Calu3 (cell line): ENCODE measurements at regions of chr3 and their contacts with region 1.

Region 1: DNA sequence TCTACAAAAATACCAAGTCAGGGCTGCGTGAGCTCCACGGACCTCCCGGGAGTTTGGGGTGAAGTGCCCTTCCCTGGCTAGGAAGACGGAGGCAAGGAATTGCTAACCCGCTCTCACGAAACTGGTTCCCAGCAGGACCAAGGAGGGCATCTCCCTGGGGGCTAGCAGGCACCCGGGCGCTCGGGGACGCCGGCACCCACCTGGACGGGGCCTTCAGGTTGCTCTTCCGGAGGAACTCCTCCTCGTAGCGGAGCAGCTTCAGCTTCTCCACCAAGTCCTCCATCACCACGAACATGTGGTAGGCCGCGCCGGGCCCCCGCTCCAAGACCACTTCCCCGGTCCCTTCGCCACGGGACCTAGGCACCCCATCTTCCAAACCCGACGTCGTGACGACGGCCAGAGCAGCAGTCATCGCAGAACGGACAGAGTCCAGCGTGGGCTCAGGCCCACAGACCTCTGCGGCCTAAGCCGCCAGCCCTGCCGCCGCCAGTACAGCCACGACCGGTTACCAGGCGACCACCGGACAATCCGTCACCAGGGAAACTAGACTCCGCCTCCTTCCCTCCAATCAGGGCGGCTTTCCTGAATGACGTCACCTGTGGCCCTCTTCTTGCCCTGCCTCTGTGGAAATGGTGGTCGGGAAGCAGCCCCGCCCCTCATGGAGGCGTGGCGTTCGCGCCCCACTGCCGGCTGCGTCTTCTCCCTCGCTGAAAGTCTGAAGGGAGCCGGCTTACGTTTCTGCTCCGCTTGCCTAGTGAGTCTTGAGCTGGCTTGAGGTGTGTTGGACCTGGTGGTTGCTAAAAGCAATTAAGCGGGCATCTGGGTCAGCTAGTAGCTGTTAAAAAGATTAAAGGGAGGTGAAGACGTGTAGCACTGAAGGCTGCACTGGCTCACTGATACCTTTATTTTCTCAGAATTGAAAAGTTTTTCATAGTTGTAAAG is at the start of gene IFT57:
- DNase-seq: peak; percentile 96
- H3K4me3 Mint-ChIP-seq: peak within 1 kb of the TSS; percentile 100
- H3K27ac Mint-ChIP-seq: peak within 1 kb of the TSS; percentile 99
- H3K4me1 Mint-ChIP-seq: peaks cover 24% of the 10 kb centered on the region
- H3K27me3 Mint-ChIP-seq: no peaks in the 10 kb centered on the region
- CTCF ChIP-seq: no peak
- total RNA-seq, gene IFT57: 35.4 and 47.2 TPM in 2 replicates

Region 2: GRCh38 chr3:108088697-108089096 is 133.5 kb before region 1 on chr3:
- CTCF ChIA-PET with region 1: no interaction called
- intact Hi-C with region 1: loop called (anchors 5 kb)
- DNase-seq: peak; percentile 20
- H3K4me3 Mint-ChIP-seq: peak overlapping the region; percentile 33
- H3K27ac Mint-ChIP-seq: no peak overlapping the region
- H3K4me1 Mint-ChIP-seq: peaks cover 11% of the 10 kb centered on the region
- H3K27me3 Mint-ChIP-seq: no peaks in the 10 kb centered on the region
- CTCF ChIP-seq: no peak

Region 3: DNA sequence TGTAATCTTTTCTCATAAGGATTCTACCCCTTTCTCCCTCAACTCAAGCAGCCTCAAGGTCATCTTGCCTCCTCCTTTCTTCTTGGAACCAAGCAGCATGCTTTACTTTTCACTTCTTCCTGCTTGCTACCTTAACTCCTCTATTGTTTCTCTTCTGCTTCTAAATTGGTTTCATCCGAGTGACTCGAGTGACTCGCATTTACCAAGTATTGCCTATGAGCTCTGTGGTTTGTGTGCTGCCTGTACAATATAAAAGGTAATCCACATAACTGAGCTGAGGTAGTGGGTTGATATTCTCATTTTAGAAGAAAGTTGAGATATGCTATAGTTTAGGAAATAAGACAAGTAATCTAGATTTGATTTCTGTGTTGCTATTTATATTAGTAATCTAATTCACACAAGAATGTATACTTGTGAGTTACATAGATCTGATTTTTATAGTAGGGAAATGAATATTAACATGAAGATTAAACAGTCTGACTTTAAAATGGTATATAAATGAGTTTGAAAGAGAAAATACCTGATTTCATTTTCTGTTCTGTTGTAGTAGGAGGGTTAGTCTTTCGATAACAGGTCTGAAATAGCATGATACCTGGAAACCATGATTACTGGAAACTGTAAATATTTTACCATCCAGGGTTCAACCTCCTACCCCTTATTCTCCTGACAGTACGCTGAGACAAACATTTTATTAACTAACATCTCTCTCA is 79.7 kb after region 1 on chr3:
- CTCF ChIA-PET with region 1: no interaction called
- intact Hi-C with region 1: loop called (anchors 2 kb)
- DNase-seq: no peak
- H3K4me3 Mint-ChIP-seq: peak overlapping the region; percentile 59
- H3K27ac Mint-ChIP-seq: peak overlapping the region; percentile 91
- H3K4me1 Mint-ChIP-seq: peaks cover 78% of the 10 kb centered on the region
- H3K27me3 Mint-ChIP-seq: no peaks in the 10 kb centered on the region
- CTCF ChIP-seq: no peak

Region 4: GRCh38 chr3:108406661-108407206 is 184.6 kb after region 1 on chr3:
- CTCF ChIA-PET with region 1: no interaction called
- intact Hi-C with region 1: loop called (anchors 10 kb)
- DNase-seq: peak; percentile 10
- H3K4me3 Mint-ChIP-seq: no peak overlapping the region
- H3K27ac Mint-ChIP-seq: no peak overlapping the region
- H3K4me1 Mint-ChIP-seq: peaks cover 5% of the 10 kb centered on the region
- H3K27me3 Mint-ChIP-seq: no peaks in the 10 kb centered on the region
- CTCF ChIP-seq: peak; percentile 11

Region 5: DNA sequence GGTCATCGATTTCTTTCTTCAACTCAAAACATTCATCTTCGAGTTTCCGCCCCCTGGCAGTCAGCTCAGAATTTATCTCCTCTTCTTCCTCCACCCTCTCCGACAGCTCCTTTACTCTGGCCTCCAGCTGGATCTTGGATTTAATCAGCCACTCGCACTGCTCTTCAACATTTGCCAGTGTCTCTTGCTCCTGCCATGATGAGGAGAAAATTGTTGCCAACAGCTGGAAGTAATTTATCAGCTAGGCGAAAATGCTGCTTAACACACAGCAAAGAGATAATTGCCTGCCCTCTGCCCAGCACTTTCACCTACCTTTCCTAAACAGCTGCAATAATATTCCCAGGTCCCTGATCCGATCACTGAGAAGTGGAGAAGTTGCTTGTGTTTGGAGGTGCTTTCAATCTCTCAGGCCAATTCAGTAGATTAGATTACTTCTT is 218.9 kb after region 1 on chr3:
- CTCF ChIA-PET with region 1: no interaction called
- intact Hi-C with region 1: no loop called
- DNase-seq: no peak
- H3K4me3 Mint-ChIP-seq: no peak overlapping the region
- H3K27ac Mint-ChIP-seq: no peak overlapping the region
- H3K4me1 Mint-ChIP-seq: no peaks in the 10 kb centered on the region
- H3K27me3 Mint-ChIP-seq: no peaks in the 10 kb centered on the region
- CTCF ChIP-seq: no peak

Region 6: GRCh38 chr3:108477511-108478147 is 255.4 kb after region 1 on chr3:
- CTCF ChIA-PET with region 1: no interaction called
- intact Hi-C with region 1: loop called (anchors 10 kb)
- DNase-seq: peak; percentile 58
- H3K4me3 Mint-ChIP-seq: no peak overlapping the region
- H3K27ac Mint-ChIP-seq: no peak overlapping the region
- H3K4me1 Mint-ChIP-seq: peaks cover 2% of the 10 kb centered on the region
- H3K27me3 Mint-ChIP-seq: no peaks in the 10 kb centered on the region
- CTCF ChIP-seq: peak; percentile 40